Naive thymus-derived CD4-positive, alpha-beta T cell (primary cell): ENCODE measurements at regions of chr2 and their contacts with region 1.

Region 1: DNA sequence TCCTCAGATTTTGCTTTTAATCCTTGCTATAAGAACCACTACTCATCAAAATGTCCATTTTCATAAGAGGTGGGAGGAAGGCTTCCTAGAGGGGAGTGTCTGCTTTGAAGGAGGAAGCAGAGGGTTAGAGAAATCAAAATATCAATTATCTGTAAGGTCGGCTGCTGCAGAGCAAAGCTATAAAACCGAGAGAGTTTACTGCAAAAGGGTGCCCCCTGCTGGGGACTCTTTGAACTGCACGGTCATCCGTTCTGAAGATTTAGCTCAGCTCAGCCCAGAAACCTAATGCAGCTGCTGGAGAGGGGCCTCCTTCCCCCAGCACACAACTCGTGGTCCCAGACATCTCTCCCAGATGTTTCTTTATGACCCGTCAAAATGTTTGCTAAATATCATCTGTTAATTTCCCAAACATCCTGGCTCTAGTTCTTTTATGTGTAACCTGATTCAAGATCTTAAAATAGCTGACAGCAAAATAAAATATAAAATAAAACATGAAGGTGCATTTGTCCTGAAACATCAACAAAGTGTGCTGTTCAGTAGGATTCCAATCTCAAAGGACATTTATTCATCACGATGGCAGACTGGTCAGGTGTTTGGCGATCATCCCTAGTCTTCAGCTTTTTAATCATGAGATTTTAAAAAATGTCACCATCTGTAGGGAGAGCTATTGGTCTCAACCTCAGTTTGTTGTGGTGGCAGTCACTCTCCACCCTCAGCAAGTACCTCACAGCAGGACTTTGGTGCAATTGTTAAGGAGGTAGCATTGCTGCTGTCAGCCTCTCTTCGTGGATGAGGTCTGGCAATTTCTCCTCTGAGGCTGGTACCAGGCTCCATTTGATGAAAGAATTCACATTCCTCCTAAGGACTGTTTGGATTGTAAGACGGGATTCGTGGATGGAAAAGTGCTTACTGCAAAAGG is 185.9 kb downstream of the MTX2 start:
- DNase-seq: peak; percentile 36 to 80 (median 65)
- ATAC-seq: peak; percentile 84
- H3K4me3 ChIP-seq: no peak overlapping the region
- H3K4me3 Mint-ChIP-seq: no peak overlapping the region
- H3K27ac ChIP-seq: no peak overlapping the region
- H3K27ac Mint-ChIP-seq: no peak overlapping the region
- H3K4me1 ChIP-seq: no peaks in the 10 kb centered on the region
- H3K4me1 Mint-ChIP-seq: no peaks in the 10 kb centered on the region
- H3K27me3 ChIP-seq: no peaks in the 10 kb centered on the region
- H3K27me3 Mint-ChIP-seq: peaks cover 42 to 56% (median 46%) of the 10 kb centered on the region in 5 donors

Region 2: DNA sequence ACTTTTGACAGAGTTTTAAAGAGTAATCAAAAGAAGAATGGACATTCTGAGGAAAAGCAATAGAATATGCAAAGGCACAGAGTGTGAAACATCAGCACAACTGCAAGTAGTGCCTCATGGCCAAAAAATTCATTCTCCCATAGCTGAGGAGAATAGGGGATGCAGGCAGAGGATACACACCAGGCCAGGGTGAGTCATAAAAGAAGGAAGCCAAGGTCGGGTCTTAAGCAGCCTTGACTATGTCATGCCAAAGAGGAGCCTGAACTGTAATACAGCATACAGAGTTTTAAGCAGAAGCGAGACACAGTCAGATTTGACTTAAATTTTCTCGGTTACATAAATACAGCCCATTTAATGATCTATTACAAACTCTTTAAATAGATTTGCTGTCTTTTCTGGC is 618.1 kb before region 1 on chr2:
- CTCF ChIA-PET with region 1: no interaction called
- POLR2A ChIA-PET with region 1: no interaction called
- intact Hi-C with region 1: no loop called
- DNase-seq: no peak
- ATAC-seq: no peak
- H3K4me3 ChIP-seq: no peak overlapping the region
- H3K4me3 Mint-ChIP-seq: no peak overlapping the region
- H3K27ac ChIP-seq: no peak overlapping the region
- H3K27ac Mint-ChIP-seq: no peak overlapping the region
- H3K4me1 ChIP-seq: no peaks in the 10 kb centered on the region
- H3K4me1 Mint-ChIP-seq: no peaks in the 10 kb centered on the region
- H3K27me3 ChIP-seq: no peaks in the 10 kb centered on the region
- H3K27me3 Mint-ChIP-seq: peaks cover 9 to 57% (median 22%) of the 10 kb centered on the region in 5 donors

Region 3: GRCh38 chr2:176132205-176133171 is 322.7 kb before region 1 on chr2:
- CTCF ChIA-PET with region 1: interaction called, 65 read pairs
- POLR2A ChIA-PET with region 1: interaction called, 3 read pairs
- intact Hi-C with region 1: loop called (anchors 1 kb)
- DNase-seq: no peak
- ATAC-seq: no peak
- H3K4me3 ChIP-seq: peak overlapping the region; percentile 38
- H3K4me3 Mint-ChIP-seq: peak overlapping the region; percentile 65 to 92 (median 75)
- H3K27ac ChIP-seq: no peak overlapping the region
- H3K27ac Mint-ChIP-seq: peak overlapping the region in 4 of 9 donors; percentile 6 to 57 (median 28)
- H3K4me1 ChIP-seq: peaks cover 3 to 16% of the 10 kb centered on the region in 2 donors
- H3K4me1 Mint-ChIP-seq: peaks cover 17 to 53% (median 49%) of the 10 kb centered on the region in 7 donors
- H3K27me3 ChIP-seq: peaks cover 42 to 71% of the 10 kb centered on the region in 2 donors
- H3K27me3 Mint-ChIP-seq: peaks cover 78 to 85% (median 83%) of the 10 kb centered on the region in 5 donors

Region 4: GRCh38 chr2:176140513-176141317 is 314.4 kb before region 1 on chr2:
- CTCF ChIA-PET with region 1: interaction called, 16 read pairs
- POLR2A ChIA-PET with region 1: no interaction called
- intact Hi-C with region 1: loop called (anchors 1 kb)
- DNase-seq: peak; percentile 35 to 76 (median 61)
- ATAC-seq: peak; percentile 87
- H3K4me3 ChIP-seq: peak overlapping the region; percentile 36
- H3K4me3 Mint-ChIP-seq: peak overlapping the region in 9 of 10 donors; percentile 23 to 78 (median 43)
- H3K27ac ChIP-seq: no peak overlapping the region
- H3K27ac Mint-ChIP-seq: peak overlapping the region in 1 of 9 donors; percentile 0
- H3K4me1 ChIP-seq: peaks cover 3 to 26% of the 10 kb centered on the region in 2 donors
- H3K4me1 Mint-ChIP-seq: peaks cover 7 to 46% (median 36%) of the 10 kb centered on the region in 7 donors
- H3K27me3 ChIP-seq: peaks cover 16 to 51% of the 10 kb centered on the region in 2 donors
- H3K27me3 Mint-ChIP-seq: peaks cover 83 to 91% (median 88%) of the 10 kb centered on the region in 5 donors

Region 5: GRCh38 chr2:176554101-176555048 is 99.2 kb after region 1 on chr2:
- CTCF ChIA-PET with region 1: no interaction called
- POLR2A ChIA-PET with region 1: no interaction called
- intact Hi-C with region 1: loop called in 1 of 2 experiments (anchors 1 kb)
- DNase-seq: peak in 8 of 9 donors; percentile 23 to 66 (median 48)
- ATAC-seq: peak; percentile 69
- H3K4me3 ChIP-seq: peak overlapping the region; percentile 62
- H3K4me3 Mint-ChIP-seq: peak overlapping the region; percentile 75 to 93 (median 85)
- H3K27ac ChIP-seq: no peak overlapping the region
- H3K27ac Mint-ChIP-seq: peak overlapping the region in 3 of 9 donors; percentile 28 to 41 (median 38)
- H3K4me1 ChIP-seq: no peaks in the 10 kb centered on the region
- H3K4me1 Mint-ChIP-seq: peaks cover 6 to 13% (median 13%) of the 10 kb centered on the region in 7 donors
- H3K27me3 ChIP-seq: no peaks in the 10 kb centered on the region
- H3K27me3 Mint-ChIP-seq: peaks cover 45 to 66% (median 48%) of the 10 kb centered on the region in 5 donors

Region 6: DNA sequence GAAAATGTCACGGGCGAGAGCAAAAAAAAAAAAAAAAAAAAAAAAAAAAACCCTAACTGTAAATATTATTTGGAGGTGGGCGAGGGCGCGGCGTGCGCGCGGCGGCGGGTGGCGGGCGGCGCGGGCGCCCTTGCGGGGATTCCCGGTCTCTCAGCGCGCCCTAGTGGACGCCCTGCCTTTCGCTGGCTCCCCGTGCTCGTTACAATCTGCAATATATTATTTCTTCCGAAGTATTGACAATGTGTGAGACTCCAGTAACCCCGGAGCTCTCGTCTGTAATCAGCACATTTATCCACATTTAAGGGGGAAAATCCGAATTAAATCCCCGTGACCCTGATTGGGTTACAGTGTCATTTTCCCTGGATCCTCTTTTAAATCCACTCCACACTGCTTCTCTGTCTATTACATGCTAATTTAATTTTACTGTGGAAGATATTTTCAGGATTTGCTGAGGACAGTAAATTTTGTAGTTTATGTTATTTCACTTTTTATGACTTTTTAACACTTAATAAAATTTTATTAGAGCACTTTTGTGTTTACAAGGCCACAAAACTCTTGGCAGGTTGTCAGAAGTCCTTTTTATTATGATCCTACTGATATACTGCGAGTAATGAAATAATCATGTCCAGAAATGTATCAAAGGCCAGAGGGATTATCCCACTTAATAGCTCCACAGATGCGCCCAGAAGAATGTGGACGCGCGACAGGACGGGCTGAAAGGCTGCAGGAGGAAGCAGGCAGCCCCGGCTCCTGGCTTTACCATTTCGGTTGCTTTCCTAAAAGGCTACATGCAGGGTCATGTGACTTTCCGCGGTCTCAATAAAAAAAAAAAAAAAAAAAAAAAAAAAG is 183.2 kb after region 1 on chr2:
- CTCF ChIA-PET with region 1: no interaction called
- POLR2A ChIA-PET with region 1: no interaction called
- intact Hi-C with region 1: loop called in 1 of 2 experiments (anchors 1 kb)
- DNase-seq: peak in 8 of 9 donors; percentile 28 to 67 (median 50)
- ATAC-seq: peak; percentile 87
- H3K4me3 ChIP-seq: peak overlapping the region; percentile 45
- H3K4me3 Mint-ChIP-seq: peak overlapping the region in 9 of 10 donors; percentile 55 to 81 (median 70)
- H3K27ac ChIP-seq: no peak overlapping the region
- H3K27ac Mint-ChIP-seq: no peak overlapping the region
- H3K4me1 ChIP-seq: no peaks in the 10 kb centered on the region
- H3K4me1 Mint-ChIP-seq: peaks cover 0 to 10% (median 3%) of the 10 kb centered on the region in 7 donors
- H3K27me3 ChIP-seq: peaks cover 3 to 10% of the 10 kb centered on the region in 2 donors
- H3K27me3 Mint-ChIP-seq: peaks cover 53 to 78% (median 71%) of the 10 kb centered on the region in 5 donors

Region 7: DNA sequence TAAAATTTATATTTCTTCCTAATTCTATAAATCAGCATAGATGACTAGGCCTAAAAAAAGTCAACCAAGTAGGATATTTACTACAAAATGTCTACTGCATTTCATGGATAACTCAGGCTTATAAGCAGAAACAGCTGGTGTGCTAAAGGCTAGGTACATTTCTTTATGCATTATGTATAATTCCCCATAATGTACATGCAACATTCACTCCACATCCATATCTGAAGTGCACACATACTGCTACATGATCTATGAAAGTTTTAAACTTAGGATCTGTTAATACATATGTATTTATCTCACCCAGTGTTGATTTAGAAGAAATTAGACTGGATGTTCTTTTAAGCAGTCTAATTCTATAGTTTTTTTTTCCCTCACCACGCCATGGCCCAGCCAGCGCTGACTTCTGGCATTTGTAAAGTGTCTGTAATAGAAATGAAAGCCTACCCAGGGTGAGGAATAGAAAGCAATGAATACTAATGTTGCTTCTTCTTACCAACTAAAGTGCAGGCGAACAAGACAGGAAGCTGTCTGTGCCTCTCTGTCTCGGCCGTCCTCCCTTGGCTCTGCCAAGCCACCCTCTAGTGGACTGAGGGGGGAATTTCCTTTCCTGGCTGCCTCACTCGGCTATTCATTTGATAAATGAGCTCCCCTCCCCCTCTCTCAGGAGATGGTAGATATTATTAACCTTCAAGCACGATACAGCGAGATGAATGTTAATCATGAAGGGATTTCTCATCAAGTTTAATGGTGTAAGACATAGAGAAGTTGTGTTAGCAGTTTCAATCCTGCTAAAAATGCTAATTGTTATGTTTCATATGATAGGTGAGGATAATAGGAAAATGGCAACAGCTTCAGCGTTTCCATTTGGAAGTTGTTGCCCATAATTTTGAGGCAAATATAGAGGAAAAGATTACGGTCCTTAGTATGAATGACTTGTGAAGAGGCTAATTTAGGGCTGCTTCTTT is 198.6 kb after region 1 on chr2:
- CTCF ChIA-PET with region 1: no interaction called
- POLR2A ChIA-PET with region 1: no interaction called
- intact Hi-C with region 1: loop called (anchors 5 kb)
- DNase-seq: peak in 4 of 9 donors; percentile 23 to 26 (median 23)
- ATAC-seq: peak; percentile 49
- H3K4me3 ChIP-seq: no peak overlapping the region
- H3K4me3 Mint-ChIP-seq: no peak overlapping the region
- H3K27ac ChIP-seq: no peak overlapping the region
- H3K27ac Mint-ChIP-seq: no peak overlapping the region
- H3K4me1 ChIP-seq: no peaks in the 10 kb centered on the region
- H3K4me1 Mint-ChIP-seq: peaks cover 0 to 14% (median 6%) of the 10 kb centered on the region in 7 donors
- H3K27me3 ChIP-seq: no peaks in the 10 kb centered on the region
- H3K27me3 Mint-ChIP-seq: peaks cover 45 to 67% (median 65%) of the 10 kb centered on the region in 5 donors

Region 8: DNA sequence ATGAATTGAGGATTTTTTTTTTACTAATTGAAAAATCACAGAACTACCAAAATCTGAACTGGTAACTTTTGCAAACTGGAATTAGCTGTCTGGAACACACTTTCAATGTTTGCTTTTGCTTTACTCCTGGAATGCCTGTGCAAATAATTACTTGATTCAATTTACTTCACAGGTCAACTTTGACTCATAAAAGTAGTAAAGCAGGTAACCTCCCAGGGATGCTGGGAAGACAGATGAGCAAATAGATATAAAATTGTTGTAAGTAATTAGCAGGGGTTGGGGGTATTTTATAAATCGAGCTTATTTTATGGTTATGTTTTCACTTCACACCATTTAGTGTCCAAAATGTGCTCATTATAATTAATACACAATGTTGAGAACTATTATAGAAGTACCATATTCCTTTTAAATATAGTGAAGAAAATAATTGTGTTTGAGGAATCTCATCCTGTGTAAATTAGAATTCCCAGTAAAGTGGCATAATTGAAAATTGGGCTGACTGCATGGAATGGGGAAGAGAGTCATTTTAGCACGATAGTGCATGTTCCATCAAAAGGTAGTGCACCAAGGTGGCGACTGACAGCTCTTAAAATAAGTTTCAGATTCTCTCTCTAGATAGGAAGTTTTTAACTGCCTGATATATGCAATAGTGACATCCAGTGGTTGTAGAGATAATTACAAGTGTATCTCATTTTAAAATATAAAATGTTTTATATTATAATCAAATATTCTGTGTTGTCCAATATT is 359.3 kb after region 1 on chr2:
- CTCF ChIA-PET with region 1: no interaction called
- POLR2A ChIA-PET with region 1: no interaction called
- intact Hi-C with region 1: loop called in 1 of 2 experiments (anchors 5 kb)
- DNase-seq: peak in 5 of 9 donors; percentile 34 to 47 (median 44)
- ATAC-seq: peak; percentile 80
- H3K4me3 ChIP-seq: no peak overlapping the region
- H3K4me3 Mint-ChIP-seq: peak overlapping the region in 7 of 10 donors; percentile 7 to 62 (median 24)
- H3K27ac ChIP-seq: no peak overlapping the region
- H3K27ac Mint-ChIP-seq: no peak overlapping the region
- H3K4me1 ChIP-seq: peaks cover 3 to 7% of the 10 kb centered on the region in 2 donors
- H3K4me1 Mint-ChIP-seq: peaks cover 10 to 26% (median 19%) of the 10 kb centered on the region in 7 donors
- H3K27me3 ChIP-seq: no peaks in the 10 kb centered on the region
- H3K27me3 Mint-ChIP-seq: peaks cover 0 to 7% (median 0%) of the 10 kb centered on the region in 5 donors